ENCODE measurements at regions of chr16 and their contacts with region 1.

Region 1: GRCh38 chr16:16062023-16062932 is 112.9 kb downstream of the ABCC1 start:
- DNase-seq: peak; percentile 91
- H3K4me3 ChIP-seq: no peak overlapping the region
- H3K27ac ChIP-seq: peak overlapping the region; percentile 75 to 92 (median 85)
- H3K4me1 ChIP-seq: peaks cover 0 to 75% (median 64%) of the 10 kb centered on the region in 4 donors
- H3K27me3 ChIP-seq: no peaks in the 10 kb centered on the region
- CTCF ChIP-seq: peak in 3 of 4 experiments; percentile 18 to 36 (median 25)
- EP300 ChIP-seq: peak; percentile 89 to 97 (median 90)
- POLR2A ChIP-seq: no peak

Region 2: GRCh38 chr16:15829460-15829859 is 232.8 kb before region 1 on chr16:
- intact Hi-C with region 1: no loop called
- DNase-seq: peak; percentile 97
- H3K4me3 ChIP-seq: peak overlapping the region in 3 of 4 donors; percentile 0 to 22 (median 11)
- H3K27ac ChIP-seq: peak overlapping the region; percentile 85 to 98 (median 96)
- H3K4me1 ChIP-seq: peaks cover 0 to 100% (median 88%) of the 10 kb centered on the region in 4 donors
- H3K27me3 ChIP-seq: no peaks in the 10 kb centered on the region
- CTCF ChIP-seq: no peak
- EP300 ChIP-seq: peak in 2 of 4 donors; percentile 53 to 77
- POLR2A ChIP-seq: no peak

Region 3: DNA sequence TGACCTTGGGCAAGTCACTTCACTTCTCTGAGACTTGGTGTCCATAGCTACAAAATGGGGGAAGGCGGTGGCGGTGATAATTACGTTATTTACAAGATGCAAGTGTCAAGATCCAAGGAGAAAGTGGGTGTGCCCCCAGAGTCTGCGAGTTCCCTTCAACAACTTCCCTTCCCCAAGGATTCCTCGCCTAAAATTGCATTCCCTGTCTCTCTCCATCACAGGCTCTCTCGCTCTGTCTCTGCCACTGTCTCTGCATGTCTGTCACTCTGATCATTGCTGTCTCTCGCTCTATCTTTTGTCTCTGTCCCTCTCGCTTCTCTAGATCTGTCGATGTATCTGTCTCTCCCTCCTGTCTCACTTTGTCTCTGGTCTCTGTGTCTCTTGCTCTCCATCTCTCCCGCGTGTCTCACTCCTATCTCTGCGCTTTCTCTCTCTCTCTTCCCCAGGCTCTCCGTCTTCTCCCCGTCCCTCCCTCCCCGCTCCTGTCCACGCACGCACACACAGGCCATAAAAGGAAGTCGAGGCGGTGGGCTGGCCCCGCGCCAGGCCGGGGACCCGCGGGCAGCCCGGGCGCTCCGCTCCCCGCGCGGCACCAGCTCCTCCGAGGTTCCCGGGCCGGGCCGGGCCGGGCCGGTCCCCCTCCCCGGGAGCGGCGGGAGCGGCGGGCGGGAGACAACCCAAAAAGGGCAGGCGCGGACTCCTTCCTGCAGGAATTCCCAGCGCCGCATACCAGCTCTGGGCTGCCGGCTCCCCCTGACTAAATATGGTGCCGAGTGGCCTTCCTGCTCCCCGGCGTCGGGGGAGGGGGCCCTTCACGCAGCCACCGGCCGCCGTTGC is 204.3 kb before region 1 on chr16:
- intact Hi-C with region 1: loop called (anchors 5 kb)
- DNase-seq: peak; percentile 94
- H3K4me3 ChIP-seq: peak overlapping the region; percentile 51 to 70 (median 68)
- H3K27ac ChIP-seq: peak overlapping the region; percentile 95 to 98 (median 96)
- H3K4me1 ChIP-seq: peaks cover 0 to 29% (median 20%) of the 10 kb centered on the region in 4 donors
- H3K27me3 ChIP-seq: peaks cover 0 to 4% (median 4%) of the 10 kb centered on the region in 3 donors
- CTCF ChIP-seq: no peak
- EP300 ChIP-seq: no peak
- POLR2A ChIP-seq: peak in 1 of 2 donors; percentile 15

Region 4: GRCh38 chr16:15966420-15967222 is 95.7 kb before region 1 on chr16:
- intact Hi-C with region 1: no loop called
- DNase-seq: no peak
- H3K4me3 ChIP-seq: no peak overlapping the region
- H3K27ac ChIP-seq: peak overlapping the region; percentile 23 to 66 (median 64)
- H3K4me1 ChIP-seq: peaks cover 0 to 54% (median 46%) of the 10 kb centered on the region in 4 donors
- H3K27me3 ChIP-seq: no peaks in the 10 kb centered on the region
- CTCF ChIP-seq: no peak
- EP300 ChIP-seq: no peak
- POLR2A ChIP-seq: no peak

Region 5: DNA sequence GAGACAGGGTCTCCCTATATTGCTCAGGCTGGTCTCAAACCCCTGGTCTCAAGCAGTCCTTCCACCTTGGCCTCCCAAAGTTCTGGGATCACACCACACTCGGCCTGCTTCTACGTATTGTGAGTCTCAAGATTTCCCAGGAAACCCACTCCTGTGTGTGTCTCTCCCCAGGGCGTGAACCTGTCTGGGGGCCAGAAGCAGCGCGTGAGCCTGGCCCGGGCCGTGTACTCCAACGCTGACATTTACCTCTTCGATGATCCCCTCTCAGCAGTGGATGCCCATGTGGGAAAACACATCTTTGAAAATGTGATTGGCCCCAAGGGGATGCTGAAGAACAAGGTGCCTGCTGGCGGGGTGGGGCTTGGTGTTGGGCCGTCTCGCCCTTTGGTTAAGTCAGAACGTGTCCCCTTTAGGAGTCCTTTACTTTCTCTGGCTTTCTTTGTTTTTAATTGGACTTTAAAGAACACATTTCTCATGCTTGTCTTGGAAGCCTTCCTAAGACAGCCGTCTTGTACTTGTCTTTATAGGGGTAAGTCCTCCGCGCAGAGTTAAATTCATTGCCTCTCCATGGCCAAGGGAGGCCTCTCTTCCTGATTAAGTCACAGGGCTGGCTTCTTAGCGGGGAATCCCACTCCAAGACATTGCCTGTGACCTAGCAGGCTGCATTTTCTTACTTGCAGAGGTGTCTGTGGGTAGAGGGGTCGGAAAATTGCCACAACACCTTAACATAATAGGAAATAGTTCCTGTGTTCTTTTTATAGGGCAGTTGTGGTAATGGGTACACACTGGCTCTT is 24.6 kb after region 1 on chr16:
- intact Hi-C with region 1: loop called (anchors 2 kb)
- DNase-seq: peak; percentile 84
- H3K4me3 ChIP-seq: no peak overlapping the region
- H3K27ac ChIP-seq: peak overlapping the region; percentile 75 to 92 (median 85)
- H3K4me1 ChIP-seq: peaks cover 0 to 59% (median 49%) of the 10 kb centered on the region in 4 donors
- H3K27me3 ChIP-seq: no peaks in the 10 kb centered on the region
- CTCF ChIP-seq: no peak
- EP300 ChIP-seq: peak in 2 of 4 donors; percentile 12 to 63
- POLR2A ChIP-seq: no peak